Transverse colon (tissue), 4 donors: ENCODE measurements at regions of chr7 and their contacts with region 1.

Region 1: DNA sequence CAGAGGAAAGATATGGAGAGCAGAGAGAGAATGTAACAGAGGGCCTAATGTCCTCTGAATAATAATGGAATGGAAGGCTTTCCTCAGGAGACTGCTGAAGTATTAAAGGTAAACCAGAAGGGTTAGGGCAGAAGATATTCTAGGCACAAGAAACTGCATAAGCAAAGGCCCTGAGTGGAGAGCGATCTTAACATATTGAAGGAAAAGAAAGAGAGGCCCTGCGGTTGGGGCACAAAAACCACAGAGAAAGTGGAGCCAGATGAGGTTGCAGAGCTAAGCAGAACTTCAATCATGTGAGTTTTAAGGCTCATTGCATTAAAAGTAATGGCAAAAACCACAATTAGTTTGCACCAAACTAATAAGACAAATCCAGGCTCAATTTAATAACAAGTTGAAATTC is 115.8 kb upstream of the VSTM2A start:
- DNase-seq: no peak
- H3K4me3 ChIP-seq: no peak overlapping the region
- H3K27ac ChIP-seq: no peak overlapping the region
- H3K4me1 ChIP-seq: no peaks in the 10 kb centered on the region
- H3K27me3 ChIP-seq: no peaks in the 10 kb centered on the region
- CTCF ChIP-seq: no peak
- EP300 ChIP-seq: no peak
- POLR2A ChIP-seq: no peak

Region 2: GRCh38 chr7:54339073-54339472 is 87.3 kb before region 1 on chr7:
- in situ Hi-C with region 1: loop called in 1 of 4 experiments (anchors 25 kb)
- intact Hi-C with region 1: no loop called
- DNase-seq: no peak
- H3K4me3 ChIP-seq: no peak overlapping the region
- H3K27ac ChIP-seq: no peak overlapping the region
- H3K4me1 ChIP-seq: no peaks in the 10 kb centered on the region
- H3K27me3 ChIP-seq: no peaks in the 10 kb centered on the region
- CTCF ChIP-seq: no peak
- EP300 ChIP-seq: no peak
- POLR2A ChIP-seq: no peak

Region 3: GRCh38 chr7:54674891-54675290 is 248.5 kb after region 1 on chr7:
- in situ Hi-C with region 1: no loop called
- intact Hi-C with region 1: no loop called
- DNase-seq: no peak
- H3K4me3 ChIP-seq: no peak overlapping the region
- H3K27ac ChIP-seq: no peak overlapping the region
- H3K4me1 ChIP-seq: no peaks in the 10 kb centered on the region
- H3K27me3 ChIP-seq: no peaks in the 10 kb centered on the region
- CTCF ChIP-seq: no peak
- EP300 ChIP-seq: no peak
- POLR2A ChIP-seq: no peak